Natural killer cell (primary cell): ENCODE measurements at regions of chr19 and their contacts with region 1.

Region 1: DNA sequence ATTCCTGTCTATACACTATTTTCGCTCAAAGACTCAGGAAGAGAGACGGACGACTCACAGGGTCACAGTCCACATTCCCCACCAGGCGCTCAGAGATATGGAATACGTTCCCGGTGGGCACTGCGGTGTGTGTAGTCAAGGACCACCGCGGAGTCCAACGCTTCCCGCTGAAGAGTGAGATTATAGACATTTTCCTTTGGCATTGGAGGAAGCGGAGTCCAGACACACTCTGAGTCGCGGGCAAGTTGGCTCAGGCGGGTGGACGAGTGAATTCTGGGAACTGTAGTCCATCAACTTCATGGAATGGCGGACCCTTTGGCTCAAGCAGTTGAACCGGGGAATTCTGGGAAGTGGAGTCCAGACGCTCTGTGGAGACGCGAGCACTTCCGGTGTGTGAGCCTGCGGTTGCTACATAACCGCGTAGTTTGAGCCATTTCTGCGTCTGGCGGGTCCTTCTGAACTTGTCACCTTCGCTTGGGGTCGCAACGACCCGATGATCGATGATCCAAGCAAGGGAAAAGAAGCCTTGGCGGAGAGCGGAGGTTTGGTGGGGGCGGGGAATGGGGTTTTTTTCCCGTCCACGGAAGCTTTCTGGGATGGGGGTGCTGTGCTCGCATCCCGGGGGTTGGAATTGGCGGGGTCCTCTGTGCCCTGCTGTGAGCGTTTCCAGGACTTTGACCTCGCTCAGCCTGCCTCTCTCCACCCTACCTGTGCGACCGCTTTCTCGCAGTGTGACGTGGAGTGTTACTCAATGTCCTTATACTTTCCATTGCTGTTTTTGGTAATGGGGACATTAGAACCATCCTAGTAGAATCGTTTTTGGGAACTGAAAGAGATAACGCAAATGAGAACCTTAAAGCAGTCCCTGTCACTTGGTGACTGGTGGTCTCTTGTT is at the start of gene ZNF230:
- DNase-seq: peak; percentile 70 to 95
- ATAC-seq: peak; percentile 94 to 99 (median 98)
- H3K4me3 ChIP-seq: peak within 1 kb of the TSS; percentile 70
- H3K4me3 Mint-ChIP-seq: peak within 1 kb of the TSS; percentile 97
- H3K27ac ChIP-seq: peak within 1 kb of the TSS; percentile 73
- H3K27ac Mint-ChIP-seq: peak within 1 kb of the TSS; percentile 87 to 93
- H3K4me1 ChIP-seq: peaks cover 16% of the 10 kb centered on the region
- H3K4me1 Mint-ChIP-seq: peaks cover 32 to 34% of the 10 kb centered on the region in 2 donors
- H3K27me3 ChIP-seq: no peaks in the 10 kb centered on the region
- H3K27me3 Mint-ChIP-seq: peaks cover 0 to 3% of the 10 kb centered on the region in 2 donors
- CTCF ChIP-seq: no peak
- total RNA-seq, gene ZNF230: 2.3 to 6.3 (median 3.4) TPM

Region 2: GRCh38 chr19:43983912-43984686 is 18.7 kb before region 1 on chr19 and contains the start of gene ZNF155:
- intact Hi-C with region 1: loop called (anchors 1 kb)
- DNase-seq: peak; percentile 56 to 86
- ATAC-seq: peak; percentile 90 to 92 (median 91)
- H3K4me3 ChIP-seq: peak within 1 kb of the TSS; percentile 75
- H3K4me3 Mint-ChIP-seq: peak within 1 kb of the TSS; percentile 91
- H3K27ac ChIP-seq: peak within 1 kb of the TSS; percentile 49
- H3K27ac Mint-ChIP-seq: peak within 1 kb of the TSS; percentile 63 to 90
- H3K4me1 ChIP-seq: peaks cover 9% of the 10 kb centered on the region
- H3K4me1 Mint-ChIP-seq: peaks cover 0 to 5% of the 10 kb centered on the region in 2 donors
- H3K27me3 ChIP-seq: no peaks in the 10 kb centered on the region
- H3K27me3 Mint-ChIP-seq: no peaks in the 10 kb centered on the region
- CTCF ChIP-seq: no peak
- total RNA-seq, gene ZNF155: 5.1 to 8.5 (median 6.5) TPM

Region 3: GRCh38 chr19:44025217-44025936 is 22.6 kb after region 1 on chr19 and contains the start of gene ZNF222:
- intact Hi-C with region 1: loop called (anchors 1 kb)
- DNase-seq: peak; percentile 62 to 88
- ATAC-seq: peak; percentile 95 to 100 (median 99)
- H3K4me3 ChIP-seq: peak within 1 kb of the TSS; percentile 68
- H3K4me3 Mint-ChIP-seq: peak within 1 kb of the TSS; percentile 99
- H3K27ac ChIP-seq: peak within 1 kb of the TSS; percentile 32
- H3K27ac Mint-ChIP-seq: peak within 1 kb of the TSS; percentile 88 to 98
- H3K4me1 ChIP-seq: peaks cover 13% of the 10 kb centered on the region
- H3K4me1 Mint-ChIP-seq: peaks cover 24 to 28% of the 10 kb centered on the region in 2 donors
- H3K27me3 ChIP-seq: peaks cover 2% of the 10 kb centered on the region
- H3K27me3 Mint-ChIP-seq: peaks cover 15 to 28% of the 10 kb centered on the region in 2 donors
- CTCF ChIP-seq: no peak
- total RNA-seq, gene ZNF222: 5.6 to 7.6 (median 5.7) TPM

Region 4: DNA sequence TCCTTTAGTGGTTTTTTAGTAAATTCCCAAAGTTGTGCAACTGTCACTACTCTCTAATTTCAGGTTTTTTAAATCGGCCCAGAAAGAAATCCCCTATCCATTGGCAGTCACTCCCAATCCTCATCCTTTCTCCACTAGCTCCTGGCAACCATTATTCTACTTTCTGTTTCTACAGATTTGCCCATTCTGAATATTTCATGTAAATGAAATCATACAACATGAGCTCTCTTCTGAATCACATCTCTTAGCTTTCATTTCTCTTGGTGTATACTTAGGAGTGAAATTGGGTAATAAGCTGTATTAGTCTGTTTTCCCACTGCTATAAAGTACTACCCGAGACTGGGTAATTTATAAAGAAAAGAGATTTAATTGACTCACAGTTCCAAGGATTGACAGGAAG is 39.3 kb after region 1 on chr19:
- intact Hi-C with region 1: no loop called
- DNase-seq: no peak
- ATAC-seq: no peak
- H3K4me3 ChIP-seq: no peak overlapping the region
- H3K4me3 Mint-ChIP-seq: no peak overlapping the region
- H3K27ac ChIP-seq: no peak overlapping the region
- H3K27ac Mint-ChIP-seq: no peak overlapping the region
- H3K4me1 ChIP-seq: no peaks in the 10 kb centered on the region
- H3K4me1 Mint-ChIP-seq: no peaks in the 10 kb centered on the region
- H3K27me3 ChIP-seq: peaks cover 4% of the 10 kb centered on the region
- H3K27me3 Mint-ChIP-seq: peaks cover 31 to 47% of the 10 kb centered on the region in 2 donors
- CTCF ChIP-seq: no peak

Region 5: GRCh38 chr19:44164673-44165512 is 162.1 kb after region 1 on chr19 and contains the start of gene ZNF226:
- intact Hi-C with region 1: no loop called
- DNase-seq: peak; percentile 45 to 93
- ATAC-seq: peak; percentile 84 to 97 (median 93)
- H3K4me3 ChIP-seq: peak within 1 kb of the TSS; percentile 71
- H3K4me3 Mint-ChIP-seq: peak within 1 kb of the TSS; percentile 98
- H3K27ac ChIP-seq: peak within 1 kb of the TSS; percentile 77
- H3K27ac Mint-ChIP-seq: peak within 1 kb of the TSS; percentile 96 to 98
- H3K4me1 ChIP-seq: peaks cover 13% of the 10 kb centered on the region
- H3K4me1 Mint-ChIP-seq: peaks cover 38 to 42% of the 10 kb centered on the region in 2 donors
- H3K27me3 ChIP-seq: no peaks in the 10 kb centered on the region
- H3K27me3 Mint-ChIP-seq: no peaks in the 10 kb centered on the region
- CTCF ChIP-seq: no peak
- total RNA-seq, gene ZNF226: 11.1 to 16.0 (median 15.0) TPM